ENCODE measurements at regions of chr2 and their contacts with region 1.

Region 1: GRCh38 chr2:234425619-234426603 is 71.0 kb downstream of the ARL4C start:
- DNase-seq: peak; percentile 61 to 94 (median 79)
- ATAC-seq: peak; percentile 72
- H3K4me3 ChIP-seq: peak overlapping the region in 1 of 2 experiments; percentile 31
- H3K4me3 Mint-ChIP-seq: peak overlapping the region; percentile 74
- H3K27ac ChIP-seq: peak overlapping the region; percentile 83 to 92
- H3K27ac Mint-ChIP-seq: peak overlapping the region; percentile 100
- H3K4me1 ChIP-seq: peaks cover 85% of the 10 kb centered on the region
- H3K4me1 Mint-ChIP-seq: peaks cover 91% of the 10 kb centered on the region
- H3K27me3 ChIP-seq: no peaks in the 10 kb centered on the region
- H3K27me3 Mint-ChIP-seq: no peaks in the 10 kb centered on the region
- CTCF ChIP-seq: no peak

Region 2: DNA sequence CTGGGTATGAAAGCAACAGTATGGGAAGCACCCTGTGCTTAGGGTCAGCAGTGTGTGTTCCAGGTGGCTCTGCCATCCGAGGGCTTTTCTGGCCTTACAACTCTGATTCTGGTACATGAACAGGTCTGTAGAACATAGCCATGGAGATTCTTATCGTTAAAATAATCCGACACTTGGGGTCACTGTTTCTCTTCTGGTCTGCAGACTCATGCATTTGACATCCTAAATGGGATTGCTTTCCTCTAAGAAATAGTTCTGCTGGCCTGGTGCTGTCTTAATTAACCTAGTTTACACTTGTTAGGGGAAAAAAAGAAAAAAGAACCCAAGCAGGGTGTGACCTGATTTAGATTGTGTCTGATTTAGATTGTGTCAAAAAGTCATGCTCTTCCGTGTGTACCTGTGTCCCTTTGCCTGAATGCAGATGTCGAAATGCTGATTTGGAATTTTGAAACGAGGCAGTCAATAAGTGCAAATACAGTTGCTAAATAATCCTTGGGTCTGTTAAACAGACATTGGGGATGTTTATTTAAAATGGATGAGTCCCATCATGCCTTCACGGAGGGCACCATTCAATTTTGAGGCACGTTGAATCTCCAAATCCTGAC is 449.1 kb before region 1 on chr2:
- CTCF ChIA-PET with region 1: interaction called, 3 read pairs
- POLR2A ChIA-PET with region 1: no interaction called
- intact Hi-C with region 1: loop called in 1 of 2 experiments (anchors 5 kb)
- DNase-seq: peak in 4 of 9 experiments; percentile 28 to 82 (median 66)
- ATAC-seq: peak; percentile 71
- H3K4me3 ChIP-seq: no peak overlapping the region
- H3K4me3 Mint-ChIP-seq: no peak overlapping the region
- H3K27ac ChIP-seq: no peak overlapping the region
- H3K27ac Mint-ChIP-seq: peak overlapping the region; percentile 8
- H3K4me1 ChIP-seq: peaks cover 8% of the 10 kb centered on the region
- H3K4me1 Mint-ChIP-seq: peaks cover 29% of the 10 kb centered on the region
- H3K27me3 ChIP-seq: no peaks in the 10 kb centered on the region
- H3K27me3 Mint-ChIP-seq: no peaks in the 10 kb centered on the region
- CTCF ChIP-seq: peak; percentile 58

Region 3: GRCh38 chr2:234038076-234038802 is 387.7 kb before region 1 on chr2:
- CTCF ChIA-PET with region 1: no interaction called
- POLR2A ChIA-PET with region 1: no interaction called
- intact Hi-C with region 1: no loop called
- DNase-seq: no peak
- ATAC-seq: no peak
- H3K4me3 ChIP-seq: no peak overlapping the region
- H3K4me3 Mint-ChIP-seq: no peak overlapping the region
- H3K27ac ChIP-seq: no peak overlapping the region
- H3K27ac Mint-ChIP-seq: no peak overlapping the region
- H3K4me1 ChIP-seq: peaks cover 1% of the 10 kb centered on the region
- H3K4me1 Mint-ChIP-seq: peaks cover 1% of the 10 kb centered on the region
- H3K27me3 ChIP-seq: no peaks in the 10 kb centered on the region
- H3K27me3 Mint-ChIP-seq: no peaks in the 10 kb centered on the region
- CTCF ChIP-seq: no peak

Region 4: GRCh38 chr2:234308813-234309195 is 117.1 kb before region 1 on chr2:
- CTCF ChIA-PET with region 1: interaction called, 3 read pairs
- POLR2A ChIA-PET with region 1: no interaction called
- intact Hi-C with region 1: loop called in 1 of 2 experiments (anchors 5 kb)
- DNase-seq: peak; percentile 37 to 88 (median 60)
- ATAC-seq: peak; percentile 83
- H3K4me3 ChIP-seq: no peak overlapping the region
- H3K4me3 Mint-ChIP-seq: peak overlapping the region; percentile 45
- H3K27ac ChIP-seq: peak overlapping the region; percentile 12 to 48
- H3K27ac Mint-ChIP-seq: peak overlapping the region; percentile 93
- H3K4me1 ChIP-seq: peaks cover 21% of the 10 kb centered on the region
- H3K4me1 Mint-ChIP-seq: peaks cover 40% of the 10 kb centered on the region
- H3K27me3 ChIP-seq: no peaks in the 10 kb centered on the region
- H3K27me3 Mint-ChIP-seq: no peaks in the 10 kb centered on the region
- CTCF ChIP-seq: no peak

Region 5: DNA sequence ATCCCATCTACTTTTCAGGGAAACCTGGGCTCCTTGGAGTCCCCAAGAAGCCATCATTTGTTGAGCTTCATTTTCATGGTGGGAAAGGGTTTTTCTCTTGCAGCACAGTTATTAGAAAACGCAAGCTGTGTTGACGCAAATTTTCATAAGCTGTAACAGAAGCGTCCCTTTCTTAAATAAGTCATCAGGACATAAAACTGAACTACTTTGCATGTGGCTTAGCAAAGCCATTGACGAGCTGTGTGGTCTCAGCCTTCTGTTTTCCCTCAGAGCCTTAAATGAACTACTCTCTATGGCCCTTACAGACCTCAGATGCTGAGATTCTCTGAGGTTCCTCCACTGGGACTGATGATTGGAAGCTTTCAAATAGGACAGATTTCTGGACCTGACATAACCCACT is 14.1 kb before region 1 on chr2:
- CTCF ChIA-PET with region 1: interaction called, 6 read pairs
- POLR2A ChIA-PET with region 1: interaction called, 11 read pairs
- intact Hi-C with region 1: no loop called
- DNase-seq: no peak
- ATAC-seq: no peak
- H3K4me3 ChIP-seq: no peak overlapping the region
- H3K4me3 Mint-ChIP-seq: no peak overlapping the region
- H3K27ac ChIP-seq: no peak overlapping the region
- H3K27ac Mint-ChIP-seq: no peak overlapping the region
- H3K4me1 ChIP-seq: no peaks in the 10 kb centered on the region
- H3K4me1 Mint-ChIP-seq: peaks cover 26% of the 10 kb centered on the region
- H3K27me3 ChIP-seq: no peaks in the 10 kb centered on the region
- H3K27me3 Mint-ChIP-seq: no peaks in the 10 kb centered on the region
- CTCF ChIP-seq: no peak

Region 6: DNA sequence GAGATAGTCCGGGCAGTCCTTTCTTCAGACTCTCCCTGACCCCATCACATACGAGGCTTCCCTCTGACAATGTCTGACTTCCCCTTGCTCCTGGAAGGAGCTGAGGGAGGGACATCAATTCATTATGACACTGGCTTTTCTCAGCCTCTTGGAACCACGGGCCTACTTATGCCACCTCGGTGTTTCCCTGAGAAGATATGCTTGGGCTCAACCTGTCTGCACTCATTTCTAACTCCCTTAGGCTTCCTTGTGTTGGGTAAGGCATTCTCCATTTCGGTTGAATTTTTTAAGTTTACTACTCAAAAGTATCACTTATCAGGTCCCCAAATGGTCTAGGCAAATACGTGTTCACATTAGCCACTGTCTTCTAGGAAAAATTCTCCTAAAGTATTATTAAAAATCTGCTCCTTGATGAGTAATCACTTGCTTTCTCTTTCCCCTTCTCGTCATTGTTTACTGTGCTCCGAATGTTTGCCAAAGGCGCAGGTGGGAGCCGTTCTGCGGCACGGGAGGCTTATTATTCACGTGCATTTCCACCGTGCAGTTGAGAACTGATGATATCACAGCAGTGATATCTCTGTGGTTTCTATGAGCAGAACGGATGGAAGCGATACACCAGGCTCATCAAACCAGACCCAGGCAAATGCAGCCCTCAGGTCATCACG is 37.8 kb after region 1 on chr2:
- CTCF ChIA-PET with region 1: interaction called, 3 read pairs
- POLR2A ChIA-PET with region 1: interaction called, 7 read pairs
- intact Hi-C with region 1: loop called (anchors 1 kb)
- DNase-seq: peak; percentile 58 to 92 (median 75)
- ATAC-seq: peak; percentile 87
- H3K4me3 ChIP-seq: peak overlapping the region; percentile 9 to 36
- H3K4me3 Mint-ChIP-seq: peak overlapping the region; percentile 50
- H3K27ac ChIP-seq: peak overlapping the region; percentile 85 to 94
- H3K27ac Mint-ChIP-seq: peak overlapping the region; percentile 94
- H3K4me1 ChIP-seq: peaks cover 63% of the 10 kb centered on the region
- H3K4me1 Mint-ChIP-seq: peaks cover 67% of the 10 kb centered on the region
- H3K27me3 ChIP-seq: no peaks in the 10 kb centered on the region
- H3K27me3 Mint-ChIP-seq: no peaks in the 10 kb centered on the region
- CTCF ChIP-seq: no peak

Region 7: GRCh38 chr2:234494361-234495250 is 68.7 kb after region 1 on chr2:
- CTCF ChIA-PET with region 1: interaction called, 50 read pairs
- POLR2A ChIA-PET with region 1: interaction called, 45 read pairs
- intact Hi-C with region 1: loop called (anchors 1 to 2 kb)
- DNase-seq: peak in 4 of 9 experiments; percentile 35 to 81 (median 55)
- ATAC-seq: peak; percentile 14
- H3K4me3 ChIP-seq: peak overlapping the region; percentile 98 to 99
- H3K4me3 Mint-ChIP-seq: peak overlapping the region; percentile 98
- H3K27ac ChIP-seq: peak overlapping the region; percentile 89 to 99
- H3K27ac Mint-ChIP-seq: peak overlapping the region; percentile 98
- H3K4me1 ChIP-seq: peaks cover 50% of the 10 kb centered on the region
- H3K4me1 Mint-ChIP-seq: peaks cover 55% of the 10 kb centered on the region
- H3K27me3 ChIP-seq: no peaks in the 10 kb centered on the region
- H3K27me3 Mint-ChIP-seq: no peaks in the 10 kb centered on the region
- CTCF ChIP-seq: no peak